Activated T-helper 2 cell treated with anti-CD3 and anti-CD28 coated beads, Interferon-gamma antibody, Interleukin-2, Interleukin-4, amounts not matched to agents 10 μg/mL and 5 μg/mL and 100 μg/mL, durations not matched to agents 14 hours and 24 hours and 36 hours (primary cell): ENCODE measurements at regions of chr6 and their contacts with region 1.

Region 1: GRCh38 chr6:32483968-32484636 is 44.4 kb downstream of the HLA-DRA start:
- DNase-seq: no peak
- H3K4me3 Mint-ChIP-seq: no peak overlapping the region
- H3K27ac Mint-ChIP-seq: no peak overlapping the region
- H3K4me1 Mint-ChIP-seq: peaks cover 1% of the 10 kb centered on the region
- H3K27me3 Mint-ChIP-seq: peaks cover 30% of the 10 kb centered on the region

Region 2: DNA sequence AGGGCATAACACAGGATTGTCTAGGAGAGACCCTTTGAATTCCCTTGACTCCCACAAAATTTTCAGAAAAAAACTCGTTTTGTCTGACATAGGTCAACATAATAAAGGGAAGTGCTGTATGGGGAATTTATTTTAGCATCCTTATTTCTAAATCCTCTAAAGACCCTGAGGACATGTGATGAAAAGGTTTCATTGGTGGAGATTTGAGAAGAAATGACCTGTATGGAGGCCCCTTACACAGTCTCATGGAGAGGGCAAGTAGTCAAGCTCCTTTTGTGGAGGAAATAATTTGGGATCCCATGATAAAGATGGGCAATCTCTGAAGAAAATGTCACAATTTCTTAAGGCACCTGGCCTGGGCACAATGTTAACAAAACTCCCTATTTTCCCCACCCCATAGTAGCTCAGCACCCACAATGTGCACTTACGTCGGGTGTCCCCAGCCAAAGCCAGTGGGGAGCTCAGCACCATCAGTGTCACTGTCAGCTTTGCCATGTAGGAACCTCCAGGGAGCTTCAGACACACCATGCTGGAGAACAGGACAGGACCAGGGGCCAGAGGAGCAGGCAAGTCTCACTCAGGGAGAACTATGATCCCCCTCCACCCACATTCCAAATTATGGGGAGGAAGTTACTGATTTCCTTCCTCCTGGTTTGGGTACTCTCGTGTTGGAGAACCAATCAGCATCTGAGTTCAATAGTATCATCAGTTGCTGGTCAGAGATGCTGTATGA is 45.8 kb after region 1 on chr6 and contains the start of gene HLA-DRB5:
- intact Hi-C with region 1: loop called (anchors 2 kb)
- DNase-seq: no peak
- H3K4me3 Mint-ChIP-seq: peak within 1 kb of the TSS; percentile 68
- H3K27ac Mint-ChIP-seq: no peak within 1 kb of the TSS
- H3K4me1 Mint-ChIP-seq: peaks cover 3% of the 10 kb centered on the region
- H3K27me3 Mint-ChIP-seq: peaks cover 26% of the 10 kb centered on the region
- total RNA-seq, gene HLA-DRB5: 10.6 and 12.6 TPM in 2 replicates